ENCODE measurements at regions of chr1 and their contacts with region 1.

Region 1: DNA sequence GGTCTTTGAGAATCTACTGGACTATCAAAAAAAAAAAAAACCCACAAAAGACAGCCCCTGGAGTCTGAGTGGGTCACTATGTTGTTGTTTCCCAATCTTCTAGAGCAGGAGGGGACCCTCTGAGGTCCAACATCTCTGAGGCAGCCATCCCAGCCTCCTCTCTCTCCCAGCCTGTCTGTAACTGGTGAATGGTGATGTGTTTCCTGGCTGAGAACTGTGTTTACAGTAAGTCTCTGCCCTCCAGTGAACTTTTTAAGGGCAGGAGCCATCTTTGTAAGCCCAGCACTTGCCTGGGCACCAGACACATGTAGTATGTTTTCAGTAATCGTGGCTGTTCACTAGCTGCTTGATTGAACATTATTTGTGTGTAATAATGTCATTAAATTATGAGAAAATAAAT is 85.7 kb downstream of the SPATA46 start:
- DNase-seq: no peak
- H3K4me3 ChIP-seq: no peak overlapping the region
- H3K27ac ChIP-seq: no peak overlapping the region
- H3K4me1 ChIP-seq: peaks cover 23% of the 10 kb centered on the region
- H3K27me3 ChIP-seq: no peaks in the 10 kb centered on the region
- CTCF ChIP-seq: no peak

Region 2: DNA sequence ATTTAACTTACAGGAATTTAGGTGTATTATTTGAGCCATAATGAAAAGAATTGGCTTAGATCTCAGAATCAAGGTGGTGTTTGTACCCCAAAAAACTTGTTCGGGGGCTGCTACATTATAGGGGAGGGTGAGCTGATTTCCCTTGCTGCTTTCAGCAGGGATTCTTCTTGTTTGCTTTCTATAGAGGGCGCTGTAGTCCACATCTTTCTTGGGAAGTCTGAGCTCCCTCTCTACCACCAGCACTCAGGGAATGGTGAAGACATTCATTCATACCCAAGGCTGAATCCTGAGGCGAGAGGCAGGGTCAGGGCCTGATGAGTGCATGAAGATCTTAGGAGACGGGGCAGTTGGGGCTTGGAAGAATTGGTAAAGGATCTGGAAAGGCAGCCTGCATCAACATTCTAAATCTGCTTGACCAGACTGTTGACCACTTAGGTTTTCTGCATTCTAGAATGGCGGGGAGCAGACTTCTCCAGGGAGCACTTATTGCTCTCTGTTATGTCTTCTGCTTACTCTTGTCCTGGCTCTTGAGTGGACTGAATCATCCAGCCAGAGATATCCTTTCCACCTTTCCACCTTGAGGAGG is 66.8 kb after region 1 on chr1:
- CTCF ChIA-PET with region 1: no interaction called
- POLR2A ChIA-PET with region 1: interaction called, 10 read pairs
- intact Hi-C with region 1: no loop called
- DNase-seq: no peak
- H3K4me3 ChIP-seq: no peak overlapping the region
- H3K27ac ChIP-seq: no peak overlapping the region
- H3K4me1 ChIP-seq: no peaks in the 10 kb centered on the region
- H3K27me3 ChIP-seq: no peaks in the 10 kb centered on the region
- CTCF ChIP-seq: peak; percentile 67